ENCODE measurements at regions of chr1 and their contacts with region 1.

Region 1: DNA sequence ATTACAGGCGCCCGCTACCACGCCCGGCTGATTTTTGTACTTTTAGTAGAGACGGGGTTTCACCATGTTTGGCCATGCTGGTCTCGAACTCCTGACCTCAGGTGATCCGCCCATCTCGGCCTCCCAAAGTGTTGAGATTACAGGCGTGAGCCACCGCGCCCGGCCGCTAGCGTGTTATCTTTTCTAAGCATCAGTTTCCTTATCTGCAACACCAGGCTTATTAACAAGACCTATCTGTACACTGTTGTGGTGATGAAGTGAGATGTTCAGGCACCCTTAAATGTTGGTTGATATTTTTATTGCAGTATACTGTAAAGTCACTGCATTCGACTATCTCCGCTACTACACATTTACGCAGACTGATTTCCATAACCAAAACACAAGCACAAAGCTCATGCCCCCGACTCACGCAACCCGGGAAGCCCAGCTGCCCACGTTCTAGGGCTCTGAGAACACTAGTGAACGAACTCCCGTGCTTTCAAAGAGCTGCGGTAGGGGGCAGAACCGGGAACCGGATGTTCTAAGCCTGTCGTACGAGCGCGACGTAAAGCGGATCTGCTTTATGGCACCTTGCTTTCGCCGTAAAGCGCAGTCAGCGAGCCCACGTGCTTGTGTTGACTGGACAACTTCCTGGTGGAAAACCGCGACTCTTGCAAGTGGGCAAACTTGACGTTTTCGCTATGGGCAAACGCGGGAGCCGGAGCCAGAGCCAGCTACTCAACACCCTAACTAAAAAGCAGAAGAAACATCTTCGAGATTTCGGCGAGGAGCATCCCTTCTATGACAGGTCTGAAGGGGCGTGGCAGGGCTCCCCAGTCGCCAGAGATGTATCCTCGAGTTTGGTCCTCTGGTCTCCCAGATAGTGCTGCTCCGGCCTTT is at the start of gene UTP25:
- DNase-seq: peak; percentile 99
- H3K4me3 ChIP-seq: peak within 1 kb of the TSS; percentile 73 to 85 (median 81)
- H3K27ac ChIP-seq: peak within 1 kb of the TSS; percentile 91
- H3K4me1 ChIP-seq: peaks cover 58% of the 10 kb centered on the region
- H3K27me3 ChIP-seq: no peaks in the 10 kb centered on the region
- CTCF ChIP-seq: peak; percentile 71 to 80
- POLR2A ChIP-seq: peak; percentile 84
- total RNA-seq, gene UTP25: 10.5 and 11.7 TPM in 2 replicates

Region 2: DNA sequence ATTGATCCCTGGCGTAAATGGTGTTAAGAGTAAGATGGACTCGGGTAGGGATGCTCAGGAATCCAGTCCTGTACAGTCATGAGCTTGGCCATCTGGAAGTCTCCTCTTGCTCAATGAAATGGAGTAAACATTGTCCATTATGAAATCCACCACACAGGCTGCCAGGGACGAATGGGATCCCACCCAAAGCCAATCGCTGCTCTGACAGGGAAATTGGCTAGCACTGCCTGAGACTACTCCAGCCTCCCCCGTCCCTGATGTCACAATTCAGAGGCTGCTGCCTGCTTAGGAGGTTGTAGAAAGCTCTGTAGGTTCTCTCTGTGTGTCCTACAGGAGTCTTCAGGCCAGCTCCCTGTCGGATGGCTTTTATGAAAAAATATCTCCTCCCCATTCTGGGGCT is 123.0 kb before region 1 on chr1 and contains the start of gene HSD11B1:
- CTCF ChIA-PET with region 1: no interaction called
- POLR2A ChIA-PET with region 1: no interaction called
- dilution Hi-C with region 1: no loop called
- intact Hi-C with region 1: no loop called
- DNase-seq: no peak
- H3K4me3 ChIP-seq: no peak within 1 kb of the TSS
- H3K27ac ChIP-seq: no peak within 1 kb of the TSS
- H3K4me1 ChIP-seq: peaks cover 5% of the 10 kb centered on the region
- H3K27me3 ChIP-seq: peaks cover 0 to 2% of the 10 kb centered on the region in 2 experiments
- CTCF ChIP-seq: no peak
- POLR2A ChIP-seq: no peak
- total RNA-seq, gene HSD11B1: not detected in 2 replicates

Region 3: DNA sequence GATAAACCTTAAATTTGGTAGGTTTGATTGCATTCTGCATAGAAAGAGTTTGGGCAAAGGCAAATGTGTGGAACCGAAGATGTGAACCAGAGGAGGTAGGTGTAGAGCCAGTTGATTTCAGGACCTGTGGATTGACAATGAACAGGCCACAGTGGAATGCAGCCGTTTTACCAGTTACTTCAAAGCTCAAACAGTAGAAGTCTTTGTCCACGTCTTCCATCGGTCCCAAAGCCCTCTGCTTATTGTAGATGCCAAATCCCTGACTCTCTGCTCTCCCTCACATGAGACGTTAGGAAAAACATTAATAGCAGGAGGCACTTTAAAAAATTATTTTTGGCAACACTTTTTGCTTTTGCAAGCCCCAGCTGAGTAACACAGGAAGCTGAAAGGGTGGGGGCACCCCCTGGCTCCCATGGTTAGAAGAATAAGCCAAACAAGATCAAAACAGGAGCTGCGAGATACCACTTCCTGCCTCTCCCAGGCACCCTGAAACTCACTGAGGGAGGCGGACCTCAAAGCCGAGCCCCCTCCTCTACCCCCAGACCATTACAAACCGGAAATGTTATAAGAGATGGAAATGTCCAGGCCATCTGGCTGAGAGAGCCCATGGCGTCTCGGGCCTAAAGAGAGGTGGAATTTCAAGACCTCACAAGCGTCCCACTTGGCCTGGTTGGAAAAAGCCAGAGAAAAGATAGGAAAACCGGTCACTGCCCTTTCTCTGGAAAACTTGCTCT is 58.3 kb before region 1 on chr1:
- CTCF ChIA-PET with region 1: interaction called, 33 read pairs
- POLR2A ChIA-PET with region 1: no interaction called
- dilution Hi-C with region 1: no loop called
- intact Hi-C with region 1: loop called (anchors 1 kb)
- DNase-seq: peak; percentile 94
- H3K4me3 ChIP-seq: no peak overlapping the region
- H3K27ac ChIP-seq: peak overlapping the region; percentile 80
- H3K4me1 ChIP-seq: peaks cover 18% of the 10 kb centered on the region
- H3K27me3 ChIP-seq: no peaks in the 10 kb centered on the region
- CTCF ChIP-seq: no peak
- POLR2A ChIP-seq: no peak

Region 4: DNA sequence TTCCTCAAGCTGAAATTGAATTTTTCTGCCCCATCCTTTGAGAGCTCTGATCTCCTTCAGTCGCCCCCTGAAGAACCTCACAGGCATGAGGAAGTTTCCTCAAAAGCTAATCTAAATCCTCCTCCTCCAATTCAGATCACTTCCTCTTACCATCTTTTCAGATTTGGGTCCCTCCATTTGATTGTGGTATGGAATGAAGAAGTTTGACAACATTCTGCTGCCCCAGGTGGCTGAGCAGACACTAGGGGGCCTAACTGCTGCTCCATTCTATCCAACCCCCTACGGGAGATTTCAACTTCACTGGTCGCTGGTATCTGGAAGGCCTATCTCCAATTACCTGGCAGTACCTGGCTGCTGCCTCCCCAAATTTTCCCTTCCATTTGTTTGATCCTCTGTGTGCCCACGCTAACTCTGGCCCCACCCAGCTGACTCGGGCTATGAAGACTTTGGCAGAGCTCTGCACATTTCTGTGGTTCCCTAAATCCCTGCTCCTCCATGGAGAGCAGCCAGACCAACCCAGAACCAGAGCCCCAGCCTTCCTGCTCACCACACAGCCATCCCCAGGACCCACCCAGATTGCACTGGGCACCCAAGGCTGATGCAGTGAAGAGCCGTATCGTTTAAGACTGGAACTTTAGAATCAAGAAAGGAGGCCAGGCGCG is 29.5 kb before region 1 on chr1:
- CTCF ChIA-PET with region 1: interaction called, 20 read pairs
- POLR2A ChIA-PET with region 1: no interaction called
- dilution Hi-C with region 1: no loop called
- intact Hi-C with region 1: loop called (anchors 1 kb)
- DNase-seq: no peak
- H3K4me3 ChIP-seq: no peak overlapping the region
- H3K27ac ChIP-seq: no peak overlapping the region
- H3K4me1 ChIP-seq: peaks cover 24% of the 10 kb centered on the region
- H3K27me3 ChIP-seq: no peaks in the 10 kb centered on the region
- CTCF ChIP-seq: peak in 1 of 2 donors; percentile 20
- POLR2A ChIP-seq: no peak

Region 5: GRCh38 chr1:209850342-209850979 is 22.8 kb after region 1 on chr1:
- CTCF ChIA-PET with region 1: interaction called, 16 read pairs
- POLR2A ChIA-PET with region 1: no interaction called
- dilution Hi-C with region 1: no loop called
- intact Hi-C with region 1: no loop called
- DNase-seq: peak; percentile 59
- H3K4me3 ChIP-seq: no peak overlapping the region
- H3K27ac ChIP-seq: no peak overlapping the region
- H3K4me1 ChIP-seq: no peaks in the 10 kb centered on the region
- H3K27me3 ChIP-seq: no peaks in the 10 kb centered on the region
- CTCF ChIP-seq: peak; percentile 70 to 76
- POLR2A ChIP-seq: no peak

Region 6: GRCh38 chr1:210233216-210234020 is 405.8 kb after region 1 on chr1:
- CTCF ChIA-PET with region 1: no interaction called
- POLR2A ChIA-PET with region 1: no interaction called
- dilution Hi-C with region 1: no loop called
- intact Hi-C with region 1: loop called (anchors 1 kb)
- DNase-seq: peak; percentile 86
- H3K4me3 ChIP-seq: peak overlapping the region; percentile 66 to 80 (median 74)
- H3K27ac ChIP-seq: peak overlapping the region; percentile 83
- H3K4me1 ChIP-seq: peaks cover 35% of the 10 kb centered on the region
- H3K27me3 ChIP-seq: peaks cover 0 to 5% of the 10 kb centered on the region in 2 experiments
- CTCF ChIP-seq: no peak
- POLR2A ChIP-seq: peak; percentile 32

Measured in endothelial cell of umbilical vein (primary cell).